Activated naive CD4-positive, alpha-beta T cell treated with anti-CD3 and anti-CD28 coated beads for 36 hours (primary cell): ENCODE measurements at regions of chr6 and their contacts with region 1.

Region 1: DNA sequence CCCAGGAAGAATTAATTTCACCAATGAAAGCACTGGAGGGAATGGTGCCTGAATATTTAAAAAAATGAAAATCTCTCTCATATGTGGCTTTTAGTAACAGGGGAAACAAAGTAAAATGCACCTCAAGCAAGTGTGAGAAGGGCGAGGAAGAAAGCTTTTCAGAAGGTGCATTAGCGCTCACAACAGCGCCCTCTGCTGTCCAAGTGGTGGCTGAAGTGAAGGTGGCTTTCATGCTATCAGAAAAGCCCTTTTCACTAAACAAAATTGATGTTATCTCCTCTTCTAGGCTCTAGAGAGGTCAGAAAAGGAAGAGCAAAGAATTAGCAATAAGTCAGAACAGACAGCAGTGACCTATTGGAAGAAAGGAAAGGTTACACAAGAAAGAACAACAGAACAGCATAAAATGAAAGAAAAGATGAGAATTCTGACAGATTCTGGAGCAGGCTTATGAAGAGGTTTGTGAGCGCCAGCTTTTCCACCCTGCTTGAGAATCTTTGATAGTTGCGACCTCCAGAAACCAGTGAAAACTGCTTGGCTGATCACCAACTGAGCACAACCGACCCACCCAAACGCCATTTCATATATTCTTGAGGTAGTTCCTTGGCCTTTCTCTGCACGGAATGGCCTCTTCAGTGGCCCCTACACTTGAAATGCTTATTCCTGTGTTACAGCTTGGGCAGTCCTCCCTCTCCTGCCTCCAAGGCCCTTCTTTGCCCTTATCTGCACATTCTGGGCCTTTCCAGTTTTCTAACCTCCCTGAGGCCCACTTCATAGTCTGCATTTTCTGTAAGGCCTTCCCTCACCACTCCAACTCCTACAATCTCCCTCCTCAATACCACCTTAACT is 45.3 kb downstream of the SMLR1 start:
- DNase-seq: peak; percentile 86
- H3K4me3 Mint-ChIP-seq: no peak overlapping the region
- H3K27ac Mint-ChIP-seq: no peak overlapping the region
- H3K4me1 Mint-ChIP-seq: peaks cover 4% of the 10 kb centered on the region
- H3K27me3 Mint-ChIP-seq: no peaks in the 10 kb centered on the region

Region 2: DNA sequence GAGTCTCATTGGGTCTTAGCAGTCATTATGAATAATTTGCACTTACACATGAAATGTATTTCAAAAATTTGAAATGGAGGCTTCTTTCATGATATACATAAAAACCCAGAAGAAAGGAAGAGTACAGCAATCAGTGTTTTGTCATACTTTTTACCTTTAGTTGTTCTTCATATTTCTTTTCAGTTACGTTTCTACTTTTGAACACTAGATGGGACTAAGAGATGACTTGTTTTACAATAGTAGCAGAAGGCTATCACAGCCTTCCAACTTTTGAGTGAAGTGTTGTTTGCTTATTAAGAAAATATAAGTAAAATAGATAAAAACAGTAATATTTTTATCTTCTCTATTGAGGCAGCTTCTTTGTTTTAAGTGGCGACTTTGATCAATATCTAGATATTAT is 796.0 kb before region 1 on chr6:
- CTCF ChIA-PET with region 1: no interaction called
- intact Hi-C with region 1: loop called (anchors 5 kb)
- DNase-seq: no peak
- H3K4me3 Mint-ChIP-seq: no peak overlapping the region
- H3K27ac Mint-ChIP-seq: no peak overlapping the region
- H3K4me1 Mint-ChIP-seq: peaks cover 14% of the 10 kb centered on the region
- H3K27me3 Mint-ChIP-seq: no peaks in the 10 kb centered on the region

Region 3: GRCh38 chr6:131116749-131117360 is 244.4 kb after region 1 on chr6:
- CTCF ChIA-PET with region 1: interaction called, 12 read pairs
- intact Hi-C with region 1: no loop called
- DNase-seq: no peak
- H3K4me3 Mint-ChIP-seq: no peak overlapping the region
- H3K27ac Mint-ChIP-seq: no peak overlapping the region
- H3K4me1 Mint-ChIP-seq: no peaks in the 10 kb centered on the region
- H3K27me3 Mint-ChIP-seq: no peaks in the 10 kb centered on the region